ENCODE measurements at regions of chr7 and their contacts with region 1.

Region 1: DNA sequence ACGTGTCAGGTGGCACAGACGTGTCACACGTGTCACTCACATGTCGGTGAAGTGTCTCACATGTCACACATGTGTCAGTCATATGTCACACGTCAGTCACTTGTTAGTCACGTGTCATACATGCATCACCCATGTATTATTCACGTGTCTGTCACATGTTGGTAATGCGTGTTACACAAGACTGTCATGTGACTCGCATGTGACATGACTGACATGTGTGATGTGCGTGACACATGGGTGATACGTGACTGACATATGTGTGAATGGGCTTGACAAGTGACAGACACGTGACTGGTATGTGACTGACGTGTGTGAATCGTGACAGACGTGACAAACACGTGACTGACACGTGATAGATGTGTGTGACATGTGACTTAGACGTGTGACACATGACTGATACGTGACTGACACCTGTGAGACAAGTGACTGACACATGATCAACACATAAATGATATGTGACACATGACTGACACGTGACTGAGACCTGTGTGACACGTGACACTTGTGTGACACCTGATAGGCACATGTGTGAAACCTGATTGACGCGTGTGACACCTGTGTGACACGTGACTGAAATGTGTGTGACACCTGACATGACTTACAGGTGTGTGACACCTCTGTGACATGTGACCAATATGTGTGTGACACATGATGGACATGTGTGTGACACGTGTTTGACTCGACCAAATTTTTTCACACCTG is 56.1 kb downstream of the ZNF92 start:
- DNase-seq: peak in 2 of 9 experiments; percentile 6 to 10
- ATAC-seq: no peak
- H3K4me3 ChIP-seq: no peak overlapping the region
- H3K4me3 Mint-ChIP-seq: no peak overlapping the region
- H3K27ac ChIP-seq: no peak overlapping the region
- H3K27ac Mint-ChIP-seq: no peak overlapping the region
- H3K4me1 ChIP-seq: no peaks in the 10 kb centered on the region
- H3K4me1 Mint-ChIP-seq: no peaks in the 10 kb centered on the region
- H3K27me3 ChIP-seq: no peaks in the 10 kb centered on the region
- H3K27me3 Mint-ChIP-seq: peaks cover under 1% of the 10 kb centered on the region
- CTCF ChIP-seq: no peak

Region 2: DNA sequence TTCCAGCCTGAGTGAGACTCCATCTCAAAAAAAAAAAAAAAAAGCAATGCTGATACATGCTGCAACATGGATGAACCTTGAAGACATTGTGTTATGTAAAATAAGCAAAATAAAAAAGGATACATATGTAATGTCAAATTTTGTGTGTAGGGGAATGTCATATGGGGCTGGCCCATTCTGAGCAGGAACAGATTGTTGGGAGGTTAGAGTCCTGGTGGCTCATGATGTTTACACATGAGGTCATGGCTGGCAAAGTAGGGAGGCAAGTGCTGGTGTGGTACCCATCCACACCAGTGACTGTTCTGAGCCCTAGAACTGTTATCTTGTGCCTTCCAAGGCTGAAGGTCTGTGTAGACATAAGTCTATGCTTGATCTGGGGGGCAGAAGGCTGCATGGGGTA is 18.5 kb before region 1 on chr7:
- CTCF ChIA-PET with region 1: no interaction called
- POLR2A ChIA-PET with region 1: no interaction called
- intact Hi-C with region 1: loop called in 1 of 2 experiments (anchors 1 kb)
- DNase-seq: no peak
- ATAC-seq: no peak
- H3K4me3 ChIP-seq: no peak overlapping the region
- H3K4me3 Mint-ChIP-seq: no peak overlapping the region
- H3K27ac ChIP-seq: no peak overlapping the region
- H3K27ac Mint-ChIP-seq: no peak overlapping the region
- H3K4me1 ChIP-seq: no peaks in the 10 kb centered on the region
- H3K4me1 Mint-ChIP-seq: no peaks in the 10 kb centered on the region
- H3K27me3 ChIP-seq: no peaks in the 10 kb centered on the region
- H3K27me3 Mint-ChIP-seq: peaks cover 4% of the 10 kb centered on the region
- CTCF ChIP-seq: no peak

Region 3: DNA sequence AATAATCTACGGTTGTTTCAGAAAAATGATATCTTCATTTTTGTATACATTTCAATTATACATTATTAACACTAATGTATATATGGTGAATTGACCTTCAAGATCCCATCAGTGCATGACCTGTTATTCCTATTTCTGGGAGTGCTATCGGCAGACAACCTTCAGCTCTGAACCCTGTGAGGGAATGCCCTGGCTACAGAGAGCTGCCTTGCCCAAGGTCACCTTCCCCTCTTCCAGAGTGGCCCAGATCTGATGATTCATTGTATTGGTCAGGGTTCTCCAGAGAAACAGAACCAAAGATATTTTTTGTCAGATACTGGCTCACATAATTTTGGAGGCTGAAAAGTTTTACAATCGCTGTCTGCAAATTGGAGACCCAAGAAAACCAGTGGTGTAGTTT is 179.3 kb after region 1 on chr7:
- CTCF ChIA-PET with region 1: no interaction called
- POLR2A ChIA-PET with region 1: no interaction called
- intact Hi-C with region 1: no loop called
- DNase-seq: no peak
- ATAC-seq: no peak
- H3K4me3 ChIP-seq: no peak overlapping the region
- H3K4me3 Mint-ChIP-seq: no peak overlapping the region
- H3K27ac ChIP-seq: no peak overlapping the region
- H3K27ac Mint-ChIP-seq: no peak overlapping the region
- H3K4me1 ChIP-seq: no peaks in the 10 kb centered on the region
- H3K4me1 Mint-ChIP-seq: no peaks in the 10 kb centered on the region
- H3K27me3 ChIP-seq: peaks cover 0 to under 1% of the 10 kb centered on the region in 2 experiments
- H3K27me3 Mint-ChIP-seq: peaks cover 32% of the 10 kb centered on the region
- CTCF ChIP-seq: no peak

Region 4: DNA sequence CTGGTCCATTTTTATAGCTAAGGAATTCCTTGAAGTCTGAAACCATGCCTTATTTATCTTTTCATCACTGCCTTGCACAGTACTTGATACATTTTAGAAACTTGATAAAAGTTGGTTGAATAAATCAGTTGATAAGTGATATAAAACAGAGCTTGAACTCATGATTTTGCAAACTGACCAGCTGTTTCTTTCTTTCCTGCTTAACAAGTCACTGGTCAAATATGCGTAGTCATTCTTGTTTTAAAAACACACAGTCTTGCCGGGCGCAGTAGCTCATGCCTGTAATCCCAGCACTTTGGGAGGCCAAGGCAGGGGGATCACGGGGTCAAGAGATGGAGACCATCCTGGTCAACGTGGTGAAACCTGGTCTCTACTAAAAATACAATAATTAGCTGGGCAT is 781.6 kb after region 1 on chr7:
- CTCF ChIA-PET with region 1: no interaction called
- POLR2A ChIA-PET with region 1: no interaction called
- intact Hi-C with region 1: no loop called
- DNase-seq: peak in 1 of 9 experiments; percentile 21
- ATAC-seq: no peak
- H3K4me3 ChIP-seq: no peak overlapping the region
- H3K4me3 Mint-ChIP-seq: no peak overlapping the region
- H3K27ac ChIP-seq: no peak overlapping the region
- H3K27ac Mint-ChIP-seq: no peak overlapping the region
- H3K4me1 ChIP-seq: peaks cover 30% of the 10 kb centered on the region
- H3K4me1 Mint-ChIP-seq: peaks cover 40% of the 10 kb centered on the region
- H3K27me3 ChIP-seq: no peaks in the 10 kb centered on the region
- H3K27me3 Mint-ChIP-seq: no peaks in the 10 kb centered on the region
- CTCF ChIP-seq: no peak